ENCODE measurements at regions of chr16 and their contacts with region 1.

Region 1: GRCh38 chr16:22206013-22206841 is at the start of gene EEF2K:
- DNase-seq: peak; percentile 88 to 90 (median 88)
- H3K4me3 ChIP-seq: peak within 1 kb of the TSS; percentile 67 to 97 (median 86)
- H3K27ac ChIP-seq: peak within 1 kb of the TSS; percentile 9 to 80
- H3K4me1 ChIP-seq: peaks cover 3 to 32% (median 20%) of the 10 kb centered on the region in 4 experiments
- H3K27me3 ChIP-seq: no peaks in the 10 kb centered on the region

Region 2: GRCh38 chr16:22065252-22065651 is 141.0 kb before region 1 on chr16:
- CTCF ChIA-PET with region 1: no interaction called
- POLR2A ChIA-PET with region 1: no interaction called
- DNase-seq: no peak
- H3K4me3 ChIP-seq: no peak overlapping the region
- H3K27ac ChIP-seq: no peak overlapping the region
- H3K4me1 ChIP-seq: peaks cover 0 to under 1% (median 0%) of the 10 kb centered on the region in 4 experiments
- H3K27me3 ChIP-seq: no peaks in the 10 kb centered on the region

Region 3: DNA sequence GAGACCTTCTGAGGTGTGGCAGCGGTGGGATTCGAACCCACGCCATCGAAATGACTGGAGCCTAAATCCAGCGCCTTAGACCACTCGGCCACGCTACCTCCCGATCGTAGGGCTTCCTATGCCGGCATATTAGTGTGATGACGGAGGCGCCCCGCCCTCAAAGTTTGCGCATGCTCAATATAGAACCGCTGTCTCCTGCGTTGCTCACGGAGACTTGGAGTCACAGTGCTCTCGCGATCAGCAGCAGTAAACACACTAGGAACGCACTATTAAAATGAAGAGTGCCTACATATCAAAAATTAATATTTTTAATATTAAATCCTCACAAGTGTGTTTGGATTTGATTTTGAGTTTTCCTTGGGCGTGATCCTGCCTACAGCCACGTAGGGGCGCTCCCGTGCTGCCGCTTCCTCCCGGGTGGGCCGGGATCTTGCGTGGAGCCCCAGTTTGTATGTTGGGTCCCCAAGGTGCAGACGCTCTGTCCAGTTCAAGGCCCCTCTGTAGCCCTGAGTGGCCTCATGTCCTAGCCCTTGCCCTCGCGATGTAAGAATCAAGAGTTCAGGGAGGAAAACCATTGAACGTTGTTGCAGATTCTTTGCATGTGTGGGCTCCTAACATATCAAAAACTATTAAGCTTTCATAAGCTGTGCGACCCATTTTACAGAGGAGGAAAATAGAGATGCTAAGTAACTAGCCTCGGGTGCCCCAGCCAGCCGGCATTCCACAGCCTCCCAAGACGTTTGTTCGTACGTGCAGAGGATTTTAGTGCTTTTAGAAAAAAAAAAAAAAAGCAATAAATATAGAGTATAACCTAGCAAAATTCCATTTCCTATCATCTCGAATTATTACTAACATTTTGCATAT is 10.3 kb before region 1 on chr16:
- CTCF ChIA-PET with region 1: interaction called, 13 read pairs
- POLR2A ChIA-PET with region 1: interaction called, 3 read pairs
- DNase-seq: peak; percentile 89 to 94 (median 90)
- H3K4me3 ChIP-seq: peak overlapping the region; percentile 44 to 95 (median 77)
- H3K27ac ChIP-seq: peak overlapping the region in 1 of 2 experiments; percentile 63
- H3K4me1 ChIP-seq: peaks cover 11 to 37% (median 28%) of the 10 kb centered on the region in 4 experiments
- H3K27me3 ChIP-seq: no peaks in the 10 kb centered on the region

Region 4: GRCh38 chr16:22217889-22218730 is 11.9 kb after region 1 on chr16:
- CTCF ChIA-PET with region 1: interaction called, 45 read pairs
- POLR2A ChIA-PET with region 1: interaction called, 3 read pairs
- DNase-seq: peak in 1 of 3 donors; percentile 44
- H3K4me3 ChIP-seq: no peak overlapping the region
- H3K27ac ChIP-seq: no peak overlapping the region
- H3K4me1 ChIP-seq: peaks cover 2 to 20% (median 12%) of the 10 kb centered on the region in 4 experiments
- H3K27me3 ChIP-seq: no peaks in the 10 kb centered on the region

Region 5: GRCh38 chr16:22297114-22297878 is 91.1 kb after region 1 on chr16 and contains the start of gene POLR3E:
- CTCF ChIA-PET with region 1: interaction called, 14 read pairs
- POLR2A ChIA-PET with region 1: no interaction called
- DNase-seq: peak; percentile 97 to 99 (median 98)
- H3K4me3 ChIP-seq: peak within 1 kb of the TSS; percentile 84 to 99 (median 95)
- H3K27ac ChIP-seq: peak within 1 kb of the TSS; percentile 92 to 97
- H3K4me1 ChIP-seq: peaks cover 0 to 28% (median 17%) of the 10 kb centered on the region in 4 experiments
- H3K27me3 ChIP-seq: no peaks in the 10 kb centered on the region